CD8-positive, alpha-beta T cell (primary cell): ENCODE measurements at regions of chr6 and their contacts with region 1.

Region 1: GRCh38 chr6:106444777-106445507 is 84.4 kb downstream of the CRYBG1 start:
- DNase-seq: peak in 3 of 9 experiments; percentile 32 to 84 (median 77)
- ATAC-seq: peak; percentile 86
- H3K4me3 ChIP-seq: no peak overlapping the region
- H3K4me3 Mint-ChIP-seq: no peak overlapping the region
- H3K27ac ChIP-seq: no peak overlapping the region
- H3K27ac Mint-ChIP-seq: no peak overlapping the region
- H3K4me1 ChIP-seq: peaks cover 12% of the 10 kb centered on the region
- H3K4me1 Mint-ChIP-seq: peaks cover 15% of the 10 kb centered on the region
- H3K27me3 ChIP-seq: peaks cover under 1 to 3% of the 10 kb centered on the region in 2 experiments
- H3K27me3 Mint-ChIP-seq: peaks cover 12% of the 10 kb centered on the region
- CTCF ChIP-seq: peak; percentile 72

Region 2: GRCh38 chr6:106339334-106340029 is 105.5 kb before region 1 on chr6:
- CTCF ChIA-PET with region 1: interaction called, 6 read pairs
- POLR2A ChIA-PET with region 1: no interaction called
- intact Hi-C with region 1: loop called (anchors 1 to 2 kb)
- DNase-seq: peak in 7 of 9 experiments; percentile 3 to 70 (median 43)
- ATAC-seq: peak; percentile 84
- H3K4me3 ChIP-seq: no peak overlapping the region
- H3K4me3 Mint-ChIP-seq: peak overlapping the region; percentile 33
- H3K27ac ChIP-seq: no peak overlapping the region
- H3K27ac Mint-ChIP-seq: no peak overlapping the region
- H3K4me1 ChIP-seq: no peaks in the 10 kb centered on the region
- H3K4me1 Mint-ChIP-seq: peaks cover 6% of the 10 kb centered on the region
- H3K27me3 ChIP-seq: peaks cover 0 to 2% of the 10 kb centered on the region in 2 experiments
- H3K27me3 Mint-ChIP-seq: peaks cover 23% of the 10 kb centered on the region
- CTCF ChIP-seq: peak; percentile 74

Region 3: GRCh38 chr6:106556368-106556960 is 111.5 kb after region 1 on chr6:
- CTCF ChIA-PET with region 1: interaction called, 278 read pairs
- POLR2A ChIA-PET with region 1: interaction called, 4 read pairs
- intact Hi-C with region 1: loop called in 1 of 2 experiments (anchors 1 kb)
- DNase-seq: peak in 2 of 9 experiments; percentile 48 to 63
- ATAC-seq: peak; percentile 70
- H3K4me3 ChIP-seq: no peak overlapping the region
- H3K4me3 Mint-ChIP-seq: no peak overlapping the region
- H3K27ac ChIP-seq: no peak overlapping the region
- H3K27ac Mint-ChIP-seq: no peak overlapping the region
- H3K4me1 ChIP-seq: no peaks in the 10 kb centered on the region
- H3K4me1 Mint-ChIP-seq: no peaks in the 10 kb centered on the region
- H3K27me3 ChIP-seq: no peaks in the 10 kb centered on the region
- H3K27me3 Mint-ChIP-seq: no peaks in the 10 kb centered on the region
- CTCF ChIP-seq: peak; percentile 62

Region 4: GRCh38 chr6:106574741-106575458 is 130.0 kb after region 1 on chr6:
- CTCF ChIA-PET with region 1: interaction called, 278 read pairs
- POLR2A ChIA-PET with region 1: interaction called, 3 read pairs
- intact Hi-C with region 1: no loop called
- DNase-seq: no peak
- ATAC-seq: no peak
- H3K4me3 ChIP-seq: no peak overlapping the region
- H3K4me3 Mint-ChIP-seq: no peak overlapping the region
- H3K27ac ChIP-seq: no peak overlapping the region
- H3K27ac Mint-ChIP-seq: no peak overlapping the region
- H3K4me1 ChIP-seq: no peaks in the 10 kb centered on the region
- H3K4me1 Mint-ChIP-seq: no peaks in the 10 kb centered on the region
- H3K27me3 ChIP-seq: no peaks in the 10 kb centered on the region
- H3K27me3 Mint-ChIP-seq: no peaks in the 10 kb centered on the region
- CTCF ChIP-seq: no peak

Region 5: GRCh38 chr6:106608062-106608668 is 163.2 kb after region 1 on chr6:
- CTCF ChIA-PET with region 1: no interaction called
- POLR2A ChIA-PET with region 1: no interaction called
- intact Hi-C with region 1: loop called in 1 of 2 experiments (anchors 1 kb)
- DNase-seq: peak in 2 of 9 experiments; percentile 61 to 71
- ATAC-seq: peak; percentile 83
- H3K4me3 ChIP-seq: no peak overlapping the region
- H3K4me3 Mint-ChIP-seq: no peak overlapping the region
- H3K27ac ChIP-seq: no peak overlapping the region
- H3K27ac Mint-ChIP-seq: no peak overlapping the region
- H3K4me1 ChIP-seq: no peaks in the 10 kb centered on the region
- H3K4me1 Mint-ChIP-seq: peaks cover 4% of the 10 kb centered on the region
- H3K27me3 ChIP-seq: no peaks in the 10 kb centered on the region
- H3K27me3 Mint-ChIP-seq: no peaks in the 10 kb centered on the region
- CTCF ChIP-seq: peak; percentile 71

Region 6: DNA sequence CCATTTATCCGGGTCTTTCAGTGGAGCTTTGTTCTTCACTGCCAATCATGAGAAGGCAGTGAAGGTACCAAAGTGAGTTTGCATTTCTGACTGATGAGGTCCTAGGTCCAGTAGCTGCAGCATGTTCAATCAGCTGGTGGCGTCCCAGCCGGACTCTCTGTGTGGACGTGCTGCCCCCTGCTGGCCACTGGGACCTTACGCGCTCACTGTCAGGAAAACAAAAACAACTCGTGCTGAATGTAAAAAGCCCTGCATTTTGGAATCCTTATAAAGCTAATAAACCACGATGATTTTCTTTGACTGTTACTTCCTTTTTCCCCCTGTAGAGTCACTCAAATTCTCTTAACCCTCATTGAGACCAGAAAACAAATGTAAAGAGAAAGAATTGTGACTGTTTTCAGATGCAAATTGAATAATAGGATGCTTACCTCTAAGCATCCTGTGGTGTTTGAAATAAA is 534.5 kb after region 1 on chr6:
- CTCF ChIA-PET with region 1: interaction called, 29 read pairs
- POLR2A ChIA-PET with region 1: no interaction called
- intact Hi-C with region 1: loop called in 1 of 2 experiments (anchors 1 kb)
- DNase-seq: peak; percentile 48 to 85 (median 78)
- ATAC-seq: peak; percentile 61
- H3K4me3 ChIP-seq: no peak overlapping the region
- H3K4me3 Mint-ChIP-seq: no peak overlapping the region
- H3K27ac ChIP-seq: no peak overlapping the region
- H3K27ac Mint-ChIP-seq: no peak overlapping the region
- H3K4me1 ChIP-seq: peaks cover 4% of the 10 kb centered on the region
- H3K4me1 Mint-ChIP-seq: peaks cover 8% of the 10 kb centered on the region
- H3K27me3 ChIP-seq: peaks cover 0 to 5% of the 10 kb centered on the region in 2 experiments
- H3K27me3 Mint-ChIP-seq: peaks cover 42% of the 10 kb centered on the region
- CTCF ChIP-seq: peak; percentile 87

Region 7: DNA sequence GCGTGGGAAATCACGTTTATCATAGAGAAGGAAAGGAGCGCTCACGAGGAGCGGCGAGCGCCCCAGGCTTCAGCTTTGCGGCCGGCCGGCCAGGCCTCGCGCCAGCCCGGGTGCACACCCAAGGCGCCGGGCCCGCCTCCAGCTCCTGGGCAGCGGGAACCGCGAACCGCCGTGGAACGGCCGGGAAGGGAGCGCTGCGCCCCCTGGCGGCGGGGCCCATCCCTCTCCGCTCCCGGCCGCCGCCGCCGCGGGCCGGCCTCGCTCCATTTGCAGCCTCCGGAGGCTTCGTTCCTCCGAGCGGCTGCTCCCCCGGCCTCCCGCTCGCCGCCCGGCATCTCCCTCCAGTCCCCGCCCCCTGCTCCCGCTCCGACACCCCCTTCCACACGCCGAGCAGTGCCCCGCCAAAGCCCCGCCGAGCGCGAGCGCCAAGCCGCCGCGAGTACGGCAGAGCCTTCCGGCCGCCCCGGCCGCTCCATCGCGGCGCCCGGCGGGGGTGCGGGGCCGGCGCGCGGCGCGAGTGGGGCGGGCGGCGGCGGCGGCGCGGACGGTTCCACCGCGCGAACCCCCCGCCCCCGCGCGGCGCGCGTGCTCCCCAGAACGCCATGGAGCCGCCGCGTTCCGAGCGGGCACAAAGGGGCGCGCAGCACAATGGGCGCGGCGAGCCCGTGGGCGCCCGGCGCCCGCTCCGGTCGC is 669.4 kb after region 1 on chr6:
- CTCF ChIA-PET with region 1: interaction called, 3 read pairs
- POLR2A ChIA-PET with region 1: no interaction called
- intact Hi-C with region 1: loop called (anchors 5 kb)
- DNase-seq: peak; percentile 28 to 83 (median 65)
- ATAC-seq: peak; percentile 53
- H3K4me3 ChIP-seq: peak overlapping the region; percentile 12 to 24
- H3K4me3 Mint-ChIP-seq: peak overlapping the region; percentile 83
- H3K27ac ChIP-seq: no peak overlapping the region
- H3K27ac Mint-ChIP-seq: no peak overlapping the region
- H3K4me1 ChIP-seq: peaks cover 11% of the 10 kb centered on the region
- H3K4me1 Mint-ChIP-seq: peaks cover 15% of the 10 kb centered on the region
- H3K27me3 ChIP-seq: peaks cover 0 to 8% of the 10 kb centered on the region in 2 experiments
- H3K27me3 Mint-ChIP-seq: no peaks in the 10 kb centered on the region
- CTCF ChIP-seq: peak; percentile 90

Region 8: GRCh38 chr6:107330168-107330567 is 885.2 kb after region 1 on chr6:
- CTCF ChIA-PET with region 1: no interaction called
- POLR2A ChIA-PET with region 1: no interaction called
- intact Hi-C with region 1: no loop called
- DNase-seq: peak in 2 of 9 experiments; percentile 5 to 45
- ATAC-seq: peak; percentile 73
- H3K4me3 ChIP-seq: no peak overlapping the region
- H3K4me3 Mint-ChIP-seq: peak overlapping the region; percentile 43
- H3K27ac ChIP-seq: no peak overlapping the region
- H3K27ac Mint-ChIP-seq: peak overlapping the region; percentile 50
- H3K4me1 ChIP-seq: no peaks in the 10 kb centered on the region
- H3K4me1 Mint-ChIP-seq: peaks cover 15% of the 10 kb centered on the region
- H3K27me3 ChIP-seq: no peaks in the 10 kb centered on the region
- H3K27me3 Mint-ChIP-seq: no peaks in the 10 kb centered on the region
- CTCF ChIP-seq: no peak